Brain microvascular endothelial cell (primary cell): ENCODE measurements at regions of chr2 and their contacts with region 1.

Region 1: DNA sequence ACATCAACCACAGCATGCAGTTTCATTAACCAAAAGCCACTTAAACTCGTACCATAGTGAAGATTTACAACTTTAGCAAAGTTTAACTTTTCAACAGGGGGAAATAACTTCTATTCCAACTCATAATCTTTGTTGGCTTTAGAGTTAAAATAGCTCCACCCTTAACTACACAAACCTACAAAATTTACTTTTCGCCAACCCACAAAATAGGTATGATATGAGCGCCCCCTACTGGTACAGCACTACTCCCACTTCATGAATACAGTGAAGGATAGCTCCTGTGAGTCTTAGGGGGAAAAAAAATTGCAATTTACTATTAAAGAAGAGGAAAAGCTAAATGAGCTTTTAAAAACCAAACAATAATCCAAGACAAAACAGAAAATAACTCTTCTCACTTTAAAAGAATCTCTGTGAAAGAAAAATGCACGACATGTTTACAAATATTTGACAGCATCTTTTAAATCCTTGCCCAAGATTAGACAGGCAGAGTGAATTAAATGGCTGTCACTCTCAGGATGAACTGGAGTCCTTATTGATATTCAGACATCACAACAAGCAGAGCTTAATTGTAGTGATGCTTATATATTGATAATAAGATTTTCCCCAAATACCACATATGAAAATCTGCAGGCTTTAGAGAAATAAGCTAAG is 32.2 kb downstream of the TMEFF2 start:
- DNase-seq: peak; percentile 75
- H3K4me3 ChIP-seq: no peak overlapping the region
- H3K27ac ChIP-seq: no peak overlapping the region
- H3K27me3 ChIP-seq: no peaks in the 10 kb centered on the region
- CTCF ChIP-seq: peak; percentile 78

Region 2: GRCh38 chr2:191555092-191555742 is 607.3 kb before region 1 on chr2:
- in situ Hi-C with region 1: loop called (anchors 25 kb)
- DNase-seq: peak; percentile 76
- H3K4me3 ChIP-seq: no peak overlapping the region
- H3K27ac ChIP-seq: no peak overlapping the region
- H3K27me3 ChIP-seq: no peaks in the 10 kb centered on the region
- CTCF ChIP-seq: peak; percentile 78

Region 3: DNA sequence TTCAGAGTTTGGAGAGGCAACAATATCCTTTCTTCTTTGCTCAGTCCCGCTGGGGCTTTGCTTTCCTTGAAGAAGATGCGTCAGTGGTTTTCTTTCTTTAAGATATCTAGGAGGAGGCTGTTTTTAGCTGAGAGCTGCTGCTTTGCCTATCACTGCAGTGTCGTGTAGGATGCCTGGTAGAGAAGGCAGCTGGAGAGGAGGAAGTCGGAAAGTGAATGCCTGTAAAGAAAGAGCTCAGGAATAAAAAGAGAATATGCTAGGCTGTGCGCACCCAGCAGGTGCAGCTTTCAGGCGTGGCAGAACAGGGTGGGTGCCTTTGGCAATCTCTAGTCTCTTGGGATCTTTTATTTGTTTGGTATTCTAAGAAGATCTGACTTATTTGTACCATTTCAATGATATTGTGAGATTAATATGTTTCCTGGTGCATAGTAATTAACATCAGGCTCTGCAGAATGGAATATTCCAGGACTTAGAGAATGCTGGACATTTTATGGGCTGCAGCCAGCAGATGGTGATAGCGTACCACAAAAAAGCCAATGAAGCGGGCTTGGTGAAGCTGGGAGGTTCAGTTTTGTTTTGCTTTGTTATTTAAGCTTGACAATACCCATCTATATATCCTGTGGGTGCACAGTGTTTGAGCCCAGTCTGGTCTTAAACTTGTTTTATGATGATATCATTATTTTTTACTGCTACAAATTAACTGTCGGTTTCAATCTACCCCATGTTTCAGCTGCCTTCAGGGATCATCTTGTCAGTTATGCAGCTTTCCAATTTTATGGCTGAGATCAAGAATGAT is 350.5 kb before region 1 on chr2:
- in situ Hi-C with region 1: loop called (anchors 25 kb)
- DNase-seq: peak; percentile 61
- H3K4me3 ChIP-seq: no peak overlapping the region
- H3K27ac ChIP-seq: no peak overlapping the region
- H3K27me3 ChIP-seq: no peaks in the 10 kb centered on the region
- CTCF ChIP-seq: peak; percentile 85